ENCODE measurements at regions of chr20 and their contacts with region 1.

Region 1: DNA sequence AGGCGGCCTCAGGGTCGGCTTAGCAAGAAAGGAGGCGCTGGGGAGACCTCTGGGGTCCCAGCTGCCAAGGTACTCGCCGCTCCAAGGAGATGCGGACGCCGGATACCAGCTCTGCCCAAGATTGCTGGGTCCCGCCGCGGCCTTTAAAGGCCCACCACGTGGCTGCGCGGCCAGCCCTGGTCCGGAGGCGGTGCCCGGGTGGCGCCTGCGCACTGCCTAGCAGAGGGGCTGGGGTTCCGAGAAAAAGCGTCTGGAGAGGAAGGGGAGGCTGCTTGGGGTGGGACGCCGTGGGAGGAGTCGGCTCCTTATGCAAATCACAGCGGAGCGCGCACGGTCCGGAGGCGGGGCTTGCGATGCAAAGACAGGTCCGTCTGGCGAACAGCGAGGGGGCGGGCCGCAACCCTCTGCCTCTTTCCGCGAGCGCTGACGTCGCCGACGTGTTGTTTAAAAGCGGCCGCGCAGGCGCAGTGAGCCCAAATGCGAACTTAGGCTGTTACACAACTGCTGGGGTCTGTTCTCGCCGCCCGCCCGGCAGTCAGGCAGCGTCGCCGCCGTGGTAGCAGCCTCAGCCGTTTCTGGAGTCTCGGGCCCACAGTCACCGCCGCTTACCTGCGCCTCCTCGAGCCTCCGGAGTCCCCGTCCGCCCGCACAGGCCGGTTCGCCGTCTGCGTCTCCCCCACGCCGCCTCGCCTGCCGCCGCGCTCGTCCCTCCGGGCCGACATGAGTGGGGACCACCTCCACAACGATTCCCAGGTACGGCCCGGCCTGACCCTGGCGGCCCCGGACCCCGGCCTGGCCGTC is at the start of gene TOP1:
- DNase-seq: peak; percentile 100
- H3K4me3 Mint-ChIP-seq: peak within 1 kb of the TSS; percentile 85
- H3K27ac Mint-ChIP-seq: peak within 1 kb of the TSS; percentile 89
- H3K4me1 Mint-ChIP-seq: peaks cover 47% of the 10 kb centered on the region
- H3K27me3 Mint-ChIP-seq: no peaks in the 10 kb centered on the region
- total RNA-seq, gene TOP1: 128 TPM

Region 2: GRCh38 chr20:41047975-41048305 is 19.4 kb after region 1 on chr20:
- CTCF ChIA-PET with region 1: interaction called, 4 read pairs
- POLR2A ChIA-PET with region 1: interaction called, 6 read pairs
- intact Hi-C with region 1: loop called (anchors 1 kb)
- DNase-seq: no peak
- H3K4me3 Mint-ChIP-seq: peak overlapping the region; percentile 76
- H3K27ac Mint-ChIP-seq: peak overlapping the region; percentile 87
- H3K4me1 Mint-ChIP-seq: peaks cover 93% of the 10 kb centered on the region
- H3K27me3 Mint-ChIP-seq: no peaks in the 10 kb centered on the region

Region 3: GRCh38 chr20:41072190-41072863 is 43.8 kb after region 1 on chr20:
- CTCF ChIA-PET with region 1: no interaction called
- POLR2A ChIA-PET with region 1: interaction called, 3 read pairs
- intact Hi-C with region 1: loop called (anchors 2 kb)
- DNase-seq: no peak
- H3K4me3 Mint-ChIP-seq: no peak overlapping the region
- H3K27ac Mint-ChIP-seq: peak overlapping the region; percentile 66
- H3K4me1 Mint-ChIP-seq: peaks cover 79% of the 10 kb centered on the region
- H3K27me3 Mint-ChIP-seq: no peaks in the 10 kb centered on the region

Region 4: DNA sequence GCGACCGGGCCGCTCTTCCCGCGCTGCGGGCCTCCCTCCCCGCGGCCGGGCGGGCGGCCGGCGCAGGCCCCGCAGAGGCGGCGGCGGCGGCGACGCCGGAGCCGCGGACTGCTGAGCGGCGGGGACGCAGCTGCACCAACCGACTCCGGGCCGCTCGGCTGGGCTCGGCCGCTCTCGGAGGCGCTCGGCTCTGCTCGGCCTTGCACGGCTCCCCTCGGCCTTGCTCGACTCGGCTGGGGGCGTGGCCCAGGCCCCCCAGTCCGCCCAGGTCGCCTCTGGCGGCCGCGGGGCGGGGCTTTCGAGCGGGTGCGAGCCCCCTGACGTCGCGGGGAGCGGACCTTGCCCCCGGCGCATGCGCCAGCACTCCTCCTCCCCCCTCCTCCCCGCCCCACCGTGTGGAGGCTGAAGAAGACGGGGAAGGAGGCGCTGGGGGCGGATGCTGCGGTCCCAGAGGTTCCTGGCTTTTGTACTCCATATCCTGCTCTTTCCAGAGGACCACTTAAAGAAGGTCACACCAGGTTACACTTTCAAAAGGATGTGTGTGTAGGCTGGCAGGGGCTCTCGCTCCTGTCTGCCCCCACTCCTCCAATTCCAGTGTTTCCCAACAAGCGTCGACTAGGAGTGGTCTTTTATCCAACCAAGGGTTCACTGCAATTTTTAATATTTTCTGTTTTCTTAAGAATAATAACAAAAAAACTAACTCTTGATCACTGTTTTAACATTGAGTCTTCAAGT is 289.2 kb after region 1 on chr20 and contains the start of gene ZHX3:
- CTCF ChIA-PET with region 1: no interaction called
- POLR2A ChIA-PET with region 1: no interaction called
- intact Hi-C with region 1: loop called (anchors 2 kb)
- DNase-seq: peak; percentile 97
- H3K4me3 Mint-ChIP-seq: peak within 1 kb of the TSS; percentile 67
- H3K27ac Mint-ChIP-seq: peak within 1 kb of the TSS; percentile 14
- H3K4me1 Mint-ChIP-seq: peaks cover 20% of the 10 kb centered on the region
- H3K27me3 Mint-ChIP-seq: no peaks in the 10 kb centered on the region
- total RNA-seq, gene ZHX3: 9.4 to 11.3 TPM